Heart right ventricle (tissue), 16 donors: ENCODE measurements at regions of chr2 and their contacts with region 1.

Region 1: GRCh38 chr2:169050478-169051240 is 18.7 kb upstream of the DHRS9 start:
- DNase-seq: no peak
- ATAC-seq: no peak
- H3K4me3 ChIP-seq: no peak overlapping the region
- H3K27ac ChIP-seq: peak overlapping the region in 1 of 10 donors; percentile 33
- H3K4me1 ChIP-seq: peaks cover 0 to 6% (median 0%) of the 10 kb centered on the region in 9 donors
- H3K27me3 ChIP-seq: no peaks in the 10 kb centered on the region
- CTCF ChIP-seq: no peak

Region 2: GRCh38 chr2:168890006-168890782 is 160.5 kb before region 1 on chr2 and contains the start of gene SPC25:
- intact Hi-C with region 1: no loop called
- DNase-seq: peak; percentile 86 to 91
- ATAC-seq: peak; percentile 93 to 99 (median 98)
- H3K4me3 ChIP-seq: peak within 1 kb of the TSS in 9 of 10 donors; percentile 29 to 57 (median 52)
- H3K27ac ChIP-seq: peak within 1 kb of the TSS in 1 of 10 donors; percentile 3
- H3K4me1 ChIP-seq: peaks cover 0 to 13% (median 4%) of the 10 kb centered on the region in 9 donors
- H3K27me3 ChIP-seq: no peaks in the 10 kb centered on the region
- CTCF ChIP-seq: no peak
- total RNA-seq, gene SPC25: 0.17 to 3.7 (median 0.50) TPM in 6 of 10 donors, not detected in the others

Region 3: GRCh38 chr2:169080250-169081069 is 29.8 kb after region 1 on chr2:
- intact Hi-C with region 1: loop called in 1 of 10 experiments (anchors 1 kb)
- DNase-seq: no peak
- ATAC-seq: peak in 3 of 8 donors; percentile 25 to 52 (median 47)
- H3K4me3 ChIP-seq: no peak overlapping the region
- H3K27ac ChIP-seq: no peak overlapping the region
- H3K4me1 ChIP-seq: peaks cover 0 to 47% (median 6%) of the 10 kb centered on the region in 9 donors
- H3K27me3 ChIP-seq: no peaks in the 10 kb centered on the region
- CTCF ChIP-seq: no peak

Region 4: GRCh38 chr2:169203928-169204327 is 153.3 kb after region 1 on chr2:
- intact Hi-C with region 1: no loop called
- DNase-seq: no peak
- ATAC-seq: no peak
- H3K4me3 ChIP-seq: no peak overlapping the region
- H3K27ac ChIP-seq: no peak overlapping the region
- H3K4me1 ChIP-seq: no peaks in the 10 kb centered on the region
- H3K27me3 ChIP-seq: no peaks in the 10 kb centered on the region
- CTCF ChIP-seq: no peak